ENCODE measurements at regions of chr22 and their contacts with region 1.

Region 1: GRCh38 chr22:48919187-48919590 is 908.5 kb downstream of the BRD1 start:
- DNase-seq: peak in 1 of 10 donors; percentile 14
- H3K4me3 ChIP-seq: peak overlapping the region in 8 of 59 donors; percentile 1 to 32 (median 12)
- H3K27ac ChIP-seq: peak overlapping the region in 58 of 59 donors; percentile 77 to 100 (median 97)
- H3K27me3 ChIP-seq: peaks cover 0 to 19% (median 0%) of the 10 kb centered on the region in 45 donors
- CTCF ChIP-seq: peak in 1 of 56 donors; percentile 4

Region 2: DNA sequence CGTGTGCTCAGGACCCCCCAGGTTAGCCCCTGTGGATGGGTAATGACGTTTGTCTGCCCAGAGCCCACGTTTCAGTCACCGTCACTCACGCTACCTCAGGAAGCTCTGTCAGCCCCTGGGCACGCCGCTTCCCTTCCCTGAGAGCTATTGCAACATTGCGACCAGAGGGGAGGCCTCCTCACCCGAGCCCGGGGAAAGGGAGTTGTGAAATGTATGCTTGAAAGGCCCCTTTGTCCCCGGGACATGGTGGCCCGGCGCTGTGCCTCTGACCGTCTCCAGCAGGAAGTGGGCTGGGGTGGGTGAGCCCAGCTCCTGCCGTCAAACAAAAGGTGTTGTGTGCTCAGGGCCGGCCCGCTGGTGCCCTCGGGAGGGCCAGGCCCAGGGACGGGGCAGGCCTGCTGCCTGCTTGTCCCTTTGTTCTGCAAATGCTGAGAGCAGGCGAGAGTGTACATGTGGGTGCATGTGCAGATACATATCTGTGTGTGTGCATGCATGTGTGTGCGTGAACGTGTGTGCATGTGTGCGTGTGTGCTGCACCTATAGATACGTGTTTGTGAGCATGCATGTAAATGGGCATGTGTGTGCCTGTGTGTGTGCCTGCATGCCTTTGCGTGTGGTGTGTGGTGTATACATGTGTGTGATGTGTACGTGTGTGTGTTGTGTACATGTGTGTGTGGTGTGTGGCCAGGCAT is 216.5 kb before region 1 on chr22:
- intact Hi-C with region 1: loop called (anchors 2 to 10 kb)
- DNase-seq: peak in 9 of 10 donors; percentile 72 to 91 (median 88)
- H3K4me3 ChIP-seq: peak overlapping the region in 1 of 59 donors; percentile 23
- H3K27ac ChIP-seq: peak overlapping the region; percentile 24 to 94 (median 85)
- H3K27me3 ChIP-seq: no peaks in the 10 kb centered on the region
- CTCF ChIP-seq: peak in 24 of 56 donors; percentile 5 to 50 (median 34)

Region 3: GRCh38 chr22:48866906-48867681 is 52.1 kb before region 1 on chr22:
- intact Hi-C with region 1: loop called in 1 of 2 experiments (anchors 5 kb)
- DNase-seq: peak in 5 of 10 donors; percentile 27 to 48 (median 40)
- H3K4me3 ChIP-seq: peak overlapping the region in 6 of 59 donors; percentile 6 to 36 (median 20)
- H3K27ac ChIP-seq: peak overlapping the region in 19 of 59 donors; percentile 1 to 63 (median 35)
- H3K27me3 ChIP-seq: peaks cover 0 to 2% (median 0%) of the 10 kb centered on the region in 45 donors
- CTCF ChIP-seq: no peak

Region 4: DNA sequence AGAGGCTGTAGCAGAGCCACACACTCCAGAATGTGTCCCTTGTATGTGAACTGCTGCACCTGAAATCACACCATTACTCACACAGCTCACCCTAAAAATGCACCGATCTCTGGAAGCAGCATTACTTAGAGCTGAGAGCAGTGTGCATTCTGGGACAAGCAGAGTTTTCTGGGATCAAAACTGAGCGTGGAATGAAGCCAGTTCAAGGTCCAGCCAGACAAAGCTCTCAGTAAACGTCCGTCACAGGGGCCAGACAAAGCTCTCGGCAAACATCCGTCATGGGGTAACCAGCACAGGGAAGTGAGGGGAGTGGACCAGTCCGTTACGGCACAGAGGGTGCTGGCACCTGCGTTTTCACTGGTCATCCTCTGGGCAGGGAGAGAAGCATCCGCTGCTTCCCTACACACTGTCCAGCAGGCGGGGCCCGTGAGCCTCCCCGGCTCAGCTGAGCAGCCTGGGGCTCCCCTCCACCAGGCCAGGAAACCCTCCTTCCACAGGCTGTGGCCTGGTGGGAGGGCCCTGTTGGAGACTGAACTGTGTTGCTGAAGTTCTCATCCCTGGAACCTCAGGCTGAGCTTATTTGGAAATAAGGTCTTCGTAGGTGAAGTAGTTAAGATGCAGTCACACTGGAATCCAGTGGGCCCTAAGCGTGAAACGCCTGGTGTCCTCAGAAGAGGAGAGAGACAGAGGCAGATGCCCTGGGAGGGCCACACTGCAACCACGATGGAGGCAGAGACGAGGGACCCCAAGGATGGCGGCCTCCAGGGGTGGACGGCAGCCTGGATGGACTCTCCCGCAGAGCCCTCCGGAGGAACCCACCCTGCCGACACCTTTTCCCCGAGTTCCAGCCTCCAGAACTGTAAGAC is 24.6 kb after region 1 on chr22:
- intact Hi-C with region 1: loop called in 1 of 2 experiments (anchors 2 kb)
- DNase-seq: peak in 8 of 10 donors; percentile 49 to 76 (median 60)
- H3K4me3 ChIP-seq: peak overlapping the region in 4 of 59 donors; percentile 18 to 29 (median 20)
- H3K27ac ChIP-seq: peak overlapping the region in 58 of 59 donors; percentile 10 to 90 (median 78)
- H3K27me3 ChIP-seq: peaks cover 0 to 5% (median 0%) of the 10 kb centered on the region in 45 donors
- CTCF ChIP-seq: peak; percentile 40 to 87 (median 72)

Region 5: GRCh38 chr22:48968201-48968959 is 49.2 kb after region 1 on chr22:
- intact Hi-C with region 1: no loop called
- DNase-seq: peak in 4 of 10 donors; percentile 22 to 41 (median 27)
- H3K4me3 ChIP-seq: no peak overlapping the region
- H3K27ac ChIP-seq: no peak overlapping the region
- H3K27me3 ChIP-seq: peaks cover 0 to 7% (median 0%) of the 10 kb centered on the region in 45 donors
- CTCF ChIP-seq: peak in 49 of 56 donors; percentile 10 to 75 (median 42)

Region 6: DNA sequence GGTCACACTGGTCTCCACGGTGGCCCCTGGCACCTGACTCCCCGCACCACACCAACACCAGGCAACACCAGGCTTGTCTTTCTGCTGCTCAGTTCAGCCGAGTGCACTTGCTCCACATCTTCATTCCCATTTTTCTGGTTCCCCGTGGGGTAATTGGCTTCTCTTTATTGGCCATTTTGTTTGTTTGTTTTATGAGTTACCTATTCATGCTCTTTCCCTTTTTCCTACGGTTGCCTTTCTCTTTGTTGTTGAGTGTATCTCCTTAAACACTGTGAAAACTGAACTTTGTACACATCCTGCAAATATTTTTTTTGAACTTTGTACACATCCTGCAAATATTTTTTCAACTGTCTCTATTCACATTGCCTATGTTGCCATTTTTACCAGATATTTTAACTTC is 74.5 kb after region 1 on chr22:
- intact Hi-C with region 1: no loop called
- DNase-seq: no peak
- H3K4me3 ChIP-seq: no peak overlapping the region
- H3K27ac ChIP-seq: no peak overlapping the region
- H3K27me3 ChIP-seq: peaks cover 0 to 14% (median 0%) of the 10 kb centered on the region in 45 donors
- CTCF ChIP-seq: no peak

Measured in dorsolateral prefrontal cortex (tissue), 120 donors.